ENCODE measurements at regions of chr2 and their contacts with region 1.

Region 1: GRCh38 chr2:120109186-120110061 is 96.5 kb downstream of the EPB41L5 start:
- DNase-seq: peak in 7 of 9 donors; percentile 14 to 73 (median 67)
- ATAC-seq: peak; percentile 80
- H3K4me3 ChIP-seq: peak overlapping the region; percentile 34
- H3K4me3 Mint-ChIP-seq: peak overlapping the region; percentile 30 to 87 (median 70)
- H3K27ac ChIP-seq: peak overlapping the region; percentile 39
- H3K27ac Mint-ChIP-seq: peak overlapping the region; percentile 10 to 90 (median 72)
- H3K4me1 ChIP-seq: peaks cover 17 to 21% of the 10 kb centered on the region in 2 donors
- H3K4me1 Mint-ChIP-seq: peaks cover 19 to 44% (median 36%) of the 10 kb centered on the region in 7 donors
- H3K27me3 ChIP-seq: no peaks in the 10 kb centered on the region
- H3K27me3 Mint-ChIP-seq: peaks cover 0 to 33% (median 0%) of the 10 kb centered on the region in 5 donors

Region 2: DNA sequence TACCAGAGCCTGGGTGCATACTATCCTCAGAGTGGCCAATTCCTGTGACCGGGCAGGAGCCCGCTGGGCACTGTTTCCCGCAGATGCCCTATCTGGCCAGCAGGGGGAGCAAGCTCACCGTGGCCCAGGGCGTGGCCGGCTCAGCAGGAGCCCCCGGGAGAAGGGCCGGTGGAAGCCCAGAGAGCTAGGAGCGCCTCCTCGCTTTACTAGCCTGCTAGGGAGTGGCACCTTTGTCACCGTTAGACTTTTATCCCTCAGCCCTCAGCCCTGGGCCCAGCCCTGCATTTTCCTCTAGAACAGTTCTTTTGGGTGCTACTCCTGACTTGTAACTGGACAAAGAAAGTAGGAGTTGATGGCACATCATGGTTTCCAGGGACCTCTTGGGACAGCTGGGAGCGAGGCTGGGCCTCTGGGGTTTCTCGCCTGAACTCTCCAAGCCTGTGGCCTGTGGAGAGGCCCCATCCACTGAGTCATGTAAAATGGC is 406.5 kb before region 1 on chr2:
- CTCF ChIA-PET with region 1: interaction called, 6 read pairs
- POLR2A ChIA-PET with region 1: no interaction called
- intact Hi-C with region 1: loop called in 1 of 2 experiments (anchors 1 kb)
- DNase-seq: peak; percentile 26 to 69 (median 53)
- ATAC-seq: peak; percentile 92
- H3K4me3 ChIP-seq: peak overlapping the region; percentile 16
- H3K4me3 Mint-ChIP-seq: no peak overlapping the region
- H3K27ac ChIP-seq: no peak overlapping the region
- H3K27ac Mint-ChIP-seq: peak overlapping the region in 2 of 9 donors; percentile 6 to 56
- H3K4me1 ChIP-seq: peaks cover 6 to 9% of the 10 kb centered on the region in 2 donors
- H3K4me1 Mint-ChIP-seq: peaks cover 0 to 23% (median 13%) of the 10 kb centered on the region in 7 donors
- H3K27me3 ChIP-seq: no peaks in the 10 kb centered on the region
- H3K27me3 Mint-ChIP-seq: peaks cover 0 to 4% (median 0%) of the 10 kb centered on the region in 5 donors

Region 3: DNA sequence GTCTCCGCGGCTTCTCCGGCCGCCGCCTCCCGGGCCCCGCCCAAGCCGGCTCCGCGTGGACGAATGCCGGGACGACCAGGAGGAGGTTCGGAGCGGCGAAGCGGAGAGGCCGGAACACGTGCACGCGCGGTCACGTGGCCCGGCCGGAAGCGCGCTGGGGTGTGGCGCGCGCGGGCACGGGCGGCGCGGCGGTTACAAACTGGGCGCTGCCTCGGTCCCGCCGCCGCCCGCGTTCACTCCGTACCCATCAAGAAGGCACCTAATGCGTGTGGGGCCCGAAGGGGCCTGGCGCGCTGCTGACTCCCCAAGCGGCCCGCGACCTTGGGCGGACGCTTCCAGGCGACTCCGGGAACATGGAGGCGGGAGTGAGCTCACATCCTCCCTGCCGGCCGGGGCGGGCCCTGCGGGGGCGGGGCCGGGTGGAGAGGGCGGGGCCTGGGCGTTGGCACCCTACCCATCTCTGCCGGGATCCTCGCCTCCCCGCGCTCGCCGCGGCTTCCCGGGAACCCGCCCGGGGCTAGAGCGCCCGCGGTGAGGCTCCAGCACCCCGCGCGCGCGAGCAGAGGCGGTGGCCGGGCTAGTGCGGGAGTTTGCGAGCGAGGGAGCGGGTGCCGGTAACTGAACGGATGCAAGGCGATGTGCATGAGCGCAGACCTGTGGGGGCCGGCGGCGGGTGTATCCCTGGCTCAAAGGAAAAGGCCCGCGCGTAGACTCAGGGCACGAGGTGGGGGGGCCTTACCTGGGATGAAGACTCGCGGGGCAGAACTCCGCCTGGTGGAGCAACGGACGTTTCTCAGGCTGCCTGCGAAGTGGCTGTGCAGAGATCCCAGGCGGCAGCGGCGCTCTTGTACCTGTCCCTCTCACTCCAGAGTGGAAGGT is 113.8 kb after region 1 on chr2 and contains the start of gene TMEM185B:
- CTCF ChIA-PET with region 1: no interaction called
- POLR2A ChIA-PET with region 1: no interaction called
- intact Hi-C with region 1: loop called in 1 of 2 experiments (anchors 1 kb)
- DNase-seq: peak; percentile 83 to 96 (median 90)
- ATAC-seq: peak; percentile 97
- H3K4me3 ChIP-seq: peak within 1 kb of the TSS; percentile 74
- H3K4me3 Mint-ChIP-seq: peak within 1 kb of the TSS; percentile 83 to 91 (median 88)
- H3K27ac ChIP-seq: peak within 1 kb of the TSS; percentile 94
- H3K27ac Mint-ChIP-seq: peak within 1 kb of the TSS; percentile 85 to 92 (median 91)
- H3K4me1 ChIP-seq: peaks cover 20 to 23% of the 10 kb centered on the region in 2 donors
- H3K4me1 Mint-ChIP-seq: peaks cover 34 to 67% (median 56%) of the 10 kb centered on the region in 7 donors
- H3K27me3 ChIP-seq: no peaks in the 10 kb centered on the region
- H3K27me3 Mint-ChIP-seq: no peaks in the 10 kb centered on the region
- total RNA-seq, gene TMEM185B: 14.9 to 36.8 (median 19.5) TPM

Region 4: GRCh38 chr2:120436885-120437603 is 327.6 kb after region 1 on chr2:
- CTCF ChIA-PET with region 1: no interaction called
- POLR2A ChIA-PET with region 1: no interaction called
- intact Hi-C with region 1: loop called (anchors 1 to 2 kb)
- DNase-seq: peak in 2 of 9 donors; percentile 7 to 10
- ATAC-seq: no peak
- H3K4me3 ChIP-seq: no peak overlapping the region
- H3K4me3 Mint-ChIP-seq: no peak overlapping the region
- H3K27ac ChIP-seq: no peak overlapping the region
- H3K27ac Mint-ChIP-seq: no peak overlapping the region
- H3K4me1 ChIP-seq: no peaks in the 10 kb centered on the region
- H3K4me1 Mint-ChIP-seq: peaks cover 0 to 5% (median 2%) of the 10 kb centered on the region in 7 donors
- H3K27me3 ChIP-seq: no peaks in the 10 kb centered on the region
- H3K27me3 Mint-ChIP-seq: peaks cover 18 to 35% (median 25%) of the 10 kb centered on the region in 5 donors

Measured in naive thymus-derived CD4-positive, alpha-beta T cell (primary cell).